GM23248 (cell line): ENCODE measurements at regions of chr15 and their contacts with region 1.

Region 1: GRCh38 chr15:56608140-56608778 is 125.0 kb downstream of the ZNF280D start:
- DNase-seq: no peak
- H3K4me3 ChIP-seq: no peak overlapping the region
- H3K27ac ChIP-seq: no peak overlapping the region
- H3K4me1 ChIP-seq: no peaks in the 10 kb centered on the region
- H3K27me3 ChIP-seq: no peaks in the 10 kb centered on the region

Region 2: GRCh38 chr15:56160966-56161365 is 447.3 kb before region 1 on chr15:
- in situ Hi-C with region 1: no loop called
- DNase-seq: no peak
- H3K4me3 ChIP-seq: no peak overlapping the region
- H3K27ac ChIP-seq: no peak overlapping the region
- H3K4me1 ChIP-seq: peaks cover 17% of the 10 kb centered on the region; the same call in 1 of the 2 replicates
- H3K27me3 ChIP-seq: no peaks in the 10 kb centered on the region

Region 3: GRCh38 chr15:56524915-56525314 is 83.3 kb before region 1 on chr15:
- in situ Hi-C with region 1: loop called (anchors 25 kb)
- DNase-seq: peak; percentile 39
- H3K4me3 ChIP-seq: no peak overlapping the region
- H3K27ac ChIP-seq: no peak overlapping the region
- H3K4me1 ChIP-seq: no peaks in the 10 kb centered on the region
- H3K27me3 ChIP-seq: peaks cover 3% of the 10 kb centered on the region; the same call in 1 of the 2 replicates

Region 4: GRCh38 chr15:56659197-56659596 is 50.9 kb after region 1 on chr15:
- in situ Hi-C with region 1: no loop called
- DNase-seq: no peak
- H3K4me3 ChIP-seq: no peak overlapping the region
- H3K27ac ChIP-seq: no peak overlapping the region
- H3K4me1 ChIP-seq: no peaks in the 10 kb centered on the region
- H3K27me3 ChIP-seq: no peaks in the 10 kb centered on the region

Region 5: GRCh38 chr15:56672721-56673120 is 64.5 kb after region 1 on chr15:
- in situ Hi-C with region 1: no loop called
- DNase-seq: peak; percentile 59
- H3K4me3 ChIP-seq: no peak overlapping the region
- H3K27ac ChIP-seq: no peak overlapping the region
- H3K4me1 ChIP-seq: 0 out of 2 replicates have a peak, but pooled peaks cover 9% of the 10 kb centered on the region
- H3K27me3 ChIP-seq: no peaks in the 10 kb centered on the region

Region 6: DNA sequence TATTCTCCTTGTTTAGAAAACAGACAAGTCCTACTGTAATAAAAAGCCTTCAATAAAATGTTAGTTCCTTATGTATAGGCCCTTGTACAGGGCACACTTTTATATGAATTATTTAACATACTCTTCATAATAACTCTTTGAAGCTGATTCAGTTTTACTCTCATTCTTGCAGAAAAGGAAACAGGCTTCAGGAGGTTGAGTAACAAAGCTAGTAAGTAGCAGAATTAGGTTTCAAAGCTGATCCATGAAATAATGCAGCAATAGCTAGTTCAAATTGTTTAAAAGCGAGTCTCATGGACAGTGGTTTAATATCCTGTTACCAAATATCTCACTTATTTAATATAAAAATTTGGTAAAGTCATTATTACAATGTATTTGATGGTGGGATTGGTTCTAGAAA is 335.1 kb after region 1 on chr15:
- in situ Hi-C with region 1: no loop called
- DNase-seq: peak; percentile 56
- H3K4me3 ChIP-seq: no peak overlapping the region
- H3K27ac ChIP-seq: peak overlapping the region; percentile 28; the same call in 1 of the 2 replicates
- H3K4me1 ChIP-seq: peaks cover 35% of the 10 kb centered on the region
- H3K27me3 ChIP-seq: no peaks in the 10 kb centered on the region